Mammary epithelial cell (primary cell): ENCODE measurements at regions of chr1 and their contacts with region 1.

Region 1: DNA sequence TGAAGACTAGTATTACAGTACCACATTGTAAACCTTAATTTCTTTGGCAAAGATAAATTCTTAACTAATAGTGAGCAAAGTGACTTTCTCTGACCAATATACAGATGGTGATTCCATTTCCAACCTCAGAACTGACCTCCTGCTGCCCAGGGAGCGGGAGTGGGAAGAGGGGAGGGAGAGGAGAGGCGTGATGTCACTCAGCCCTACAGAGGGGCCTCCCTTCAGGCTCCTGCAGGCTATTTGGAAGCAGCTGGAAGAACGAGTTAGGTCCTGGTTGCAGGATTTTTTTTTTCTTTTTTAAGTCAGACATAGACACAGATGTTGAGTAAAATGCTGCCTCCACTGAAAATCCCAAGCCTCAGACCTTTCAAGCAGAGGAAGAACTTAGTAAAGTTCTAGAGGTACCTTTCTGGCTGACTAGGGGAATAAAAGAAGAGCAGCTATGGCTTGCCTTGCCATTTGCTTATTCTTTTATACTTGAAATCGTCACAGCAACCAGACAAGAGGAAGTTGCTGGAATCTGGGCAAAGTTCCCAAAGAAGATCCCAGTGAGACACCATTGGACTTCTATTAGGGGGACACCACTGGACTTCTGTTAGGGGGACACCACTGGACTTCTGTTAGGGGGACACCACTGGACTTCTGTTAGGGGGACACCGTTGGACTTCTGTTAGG is 54.5 kb downstream of the EXO1 start:
- DNase-seq: no peak
- H3K4me3 ChIP-seq: no peak overlapping the region
- H3K27ac ChIP-seq: no peak overlapping the region
- H3K4me1 ChIP-seq: no peaks in the 10 kb centered on the region
- H3K27me3 ChIP-seq: no peaks in the 10 kb centered on the region
- CTCF ChIP-seq: no peak

Region 2: GRCh38 chr1:241964550-241965282 is 62.2 kb after region 1 on chr1:
- CTCF ChIA-PET with region 1: no interaction called
- dilution Hi-C with region 1: loop called (anchors 5 kb)
- in situ Hi-C with region 1: no loop called
- intact Hi-C with region 1: no loop called
- DNase-seq: no peak
- H3K4me3 ChIP-seq: no peak overlapping the region
- H3K27ac ChIP-seq: no peak overlapping the region
- H3K4me1 ChIP-seq: no peaks in the 10 kb centered on the region
- H3K27me3 ChIP-seq: no peaks in the 10 kb centered on the region
- CTCF ChIP-seq: no peak